Activated B cell treated with CpG ODN at 0.5 μM for 24 hours (primary cell): ENCODE measurements at regions of chr17 and their contacts with region 1.

Region 1: DNA sequence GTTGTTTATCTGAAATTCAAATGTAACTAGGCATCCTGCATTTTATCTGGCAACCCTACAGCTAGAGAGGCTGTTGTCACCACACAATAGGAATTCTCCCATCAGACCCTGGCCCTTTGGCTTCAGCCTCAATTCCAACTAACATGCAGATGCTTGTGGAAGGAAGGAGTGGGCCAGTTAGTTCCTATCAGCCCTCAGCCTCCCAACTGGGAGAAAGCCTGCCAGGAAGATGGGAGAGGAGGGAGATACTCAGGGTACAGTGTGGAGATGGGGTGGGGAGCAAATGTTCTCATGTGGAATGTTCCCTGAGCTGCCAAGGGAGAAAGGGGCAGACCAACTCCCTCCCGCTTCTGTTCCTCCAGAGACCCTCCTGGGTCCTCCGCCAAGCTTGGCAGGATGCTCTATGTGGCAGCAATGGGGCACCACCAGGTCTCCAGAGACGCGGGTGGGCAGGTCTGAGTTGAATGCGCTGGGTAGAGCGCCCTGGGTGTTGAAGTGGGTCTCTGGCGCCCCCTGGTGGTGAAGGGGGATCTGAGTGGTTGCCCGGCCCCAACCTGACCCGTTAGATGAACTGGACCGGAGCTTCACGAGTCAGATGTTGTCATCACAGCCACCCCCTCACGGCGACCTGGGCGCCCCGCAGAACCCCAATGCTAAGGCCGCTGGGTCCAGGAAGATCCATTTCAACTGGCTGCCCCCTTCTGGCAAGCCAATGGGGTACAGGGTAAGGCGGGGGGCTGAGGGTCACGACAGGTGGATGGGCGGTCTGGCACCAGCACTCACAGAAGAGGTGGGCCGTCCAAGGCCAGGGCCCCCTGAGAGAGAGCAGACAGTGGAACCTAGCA is 15.2 kb downstream of the GALK1 start:
- DNase-seq: peak; percentile 91
- ATAC-seq: peak; percentile 76
- H3K4me3 Mint-ChIP-seq: no peak overlapping the region
- H3K27ac Mint-ChIP-seq: peak overlapping the region; percentile 12
- H3K4me1 Mint-ChIP-seq: peaks cover 17% of the 10 kb centered on the region
- H3K27me3 Mint-ChIP-seq: no peaks in the 10 kb centered on the region
- CTCF ChIP-seq: no peak

Region 2: DNA sequence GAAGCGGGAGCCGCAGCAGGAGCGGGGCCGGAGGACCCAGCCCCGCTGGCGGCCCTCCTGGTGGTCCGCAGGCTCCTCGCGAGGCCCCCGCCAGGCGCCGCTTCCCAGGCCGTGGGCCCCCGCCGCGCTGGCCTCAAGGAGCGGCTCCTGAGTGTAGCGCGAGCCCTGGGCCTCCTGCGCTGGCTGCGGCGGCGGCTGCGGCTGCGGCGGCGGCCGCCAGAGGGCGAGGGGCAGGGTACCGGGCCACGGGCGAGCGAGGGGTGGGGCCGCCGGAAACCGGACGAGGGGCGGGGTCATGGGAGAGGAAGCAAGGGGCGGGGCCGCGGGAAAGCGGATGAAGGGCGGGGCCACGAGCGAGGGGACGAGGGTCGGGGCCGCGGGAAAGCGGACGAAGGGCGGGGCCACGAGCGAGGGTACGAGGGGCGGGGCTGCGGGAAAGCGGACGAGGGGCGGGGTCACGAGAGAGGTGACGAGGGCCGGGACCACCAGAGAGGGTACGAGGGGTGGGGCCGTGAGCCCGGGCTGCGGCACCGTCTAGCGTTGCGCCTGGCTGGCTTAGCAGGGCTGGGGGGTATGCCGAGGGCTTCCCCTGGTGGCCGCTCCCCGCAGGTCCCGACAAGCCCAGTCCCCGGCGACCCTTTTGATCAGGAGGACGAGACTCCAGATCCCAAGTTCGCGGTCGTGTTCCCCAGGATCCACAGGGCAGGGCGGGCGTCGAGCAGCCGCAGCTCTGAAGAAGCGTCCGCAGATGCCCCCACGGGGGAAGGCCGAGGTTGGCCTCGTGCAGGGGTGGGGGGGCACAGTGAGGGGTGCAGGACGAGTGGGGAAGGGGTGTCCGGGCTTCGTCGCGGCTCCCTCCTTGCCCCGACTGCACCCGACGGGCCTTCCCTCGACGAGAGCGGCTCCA is 160.5 kb before region 1 on chr17:
- CTCF ChIA-PET with region 1: interaction called, 7 read pairs
- POLR2A ChIA-PET with region 1: interaction called, 4 read pairs
- intact Hi-C with region 1: loop called (anchors 1 kb)
- DNase-seq: peak; percentile 97
- ATAC-seq: peak; percentile 84
- H3K4me3 Mint-ChIP-seq: peak overlapping the region; percentile 84
- H3K27ac Mint-ChIP-seq: peak overlapping the region; percentile 73
- H3K4me1 Mint-ChIP-seq: peaks cover 16% of the 10 kb centered on the region
- H3K27me3 Mint-ChIP-seq: no peaks in the 10 kb centered on the region
- CTCF ChIP-seq: no peak

Region 3: DNA sequence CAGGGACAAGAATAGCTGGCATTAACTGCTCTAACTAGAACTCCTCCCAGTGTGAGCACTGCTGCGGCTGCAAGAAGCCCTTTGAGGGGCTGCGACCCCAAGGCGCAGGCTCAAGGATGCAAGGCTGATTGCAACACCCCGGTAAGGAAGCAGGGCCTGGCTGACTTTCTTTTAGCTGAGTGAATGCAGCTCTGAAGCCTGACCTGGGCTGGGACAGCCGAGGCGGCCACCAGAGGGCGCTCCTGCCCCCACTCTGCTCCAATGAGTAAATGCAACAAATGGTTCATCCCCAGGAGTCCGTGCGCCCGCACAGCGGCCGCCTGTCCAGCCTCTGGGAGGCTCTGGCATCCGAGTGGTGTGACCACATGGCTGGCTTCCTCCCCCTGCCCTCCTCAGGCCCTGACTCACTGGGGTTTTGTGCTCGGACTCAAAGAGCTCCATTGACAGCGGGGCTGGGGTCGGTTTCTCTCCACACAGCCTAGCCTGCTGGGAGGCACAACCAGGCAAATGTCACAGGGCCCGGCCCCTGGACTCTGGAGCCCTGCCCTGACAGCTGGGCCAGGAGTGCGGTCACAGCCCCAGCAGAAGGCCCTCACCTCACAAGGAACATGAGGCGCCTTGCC is 116.8 kb before region 1 on chr17 and contains the start of gene SMIM5:
- CTCF ChIA-PET with region 1: interaction called, 346 read pairs
- POLR2A ChIA-PET with region 1: interaction called, 26 read pairs
- intact Hi-C with region 1: loop called (anchors 1 kb)
- DNase-seq: peak; percentile 83
- ATAC-seq: peak; percentile 89
- H3K4me3 Mint-ChIP-seq: peak within 1 kb of the TSS; percentile 11
- H3K27ac Mint-ChIP-seq: no peak within 1 kb of the TSS
- H3K4me1 Mint-ChIP-seq: peaks cover 13% of the 10 kb centered on the region
- H3K27me3 Mint-ChIP-seq: no peaks in the 10 kb centered on the region
- CTCF ChIP-seq: no peak
- total RNA-seq, gene SMIM5: 1.1 and 1.7 TPM in 2 replicates

Region 4: GRCh38 chr17:75673487-75673886 is 76.3 kb before region 1 on chr17:
- CTCF ChIA-PET with region 1: interaction called, 66 read pairs
- POLR2A ChIA-PET with region 1: interaction called, 3 read pairs
- intact Hi-C with region 1: loop called (anchors 1 kb)
- DNase-seq: no peak
- ATAC-seq: no peak
- H3K4me3 Mint-ChIP-seq: no peak overlapping the region
- H3K27ac Mint-ChIP-seq: no peak overlapping the region
- H3K4me1 Mint-ChIP-seq: peaks cover 28% of the 10 kb centered on the region
- H3K27me3 Mint-ChIP-seq: no peaks in the 10 kb centered on the region
- CTCF ChIP-seq: no peak

Region 5: GRCh38 chr17:75721463-75722461 is 28.0 kb before region 1 on chr17:
- CTCF ChIA-PET with region 1: no interaction called
- POLR2A ChIA-PET with region 1: no interaction called
- intact Hi-C with region 1: no loop called
- DNase-seq: no peak
- ATAC-seq: no peak
- H3K4me3 Mint-ChIP-seq: no peak overlapping the region
- H3K27ac Mint-ChIP-seq: no peak overlapping the region
- H3K4me1 Mint-ChIP-seq: peaks cover 4% of the 10 kb centered on the region
- H3K27me3 Mint-ChIP-seq: peaks cover 6% of the 10 kb centered on the region
- CTCF ChIP-seq: no peak

Region 6: GRCh38 chr17:75764711-75765421 is 15.1 kb after region 1 on chr17 and contains the start of gene GALK1:
- CTCF ChIA-PET with region 1: interaction called, 47 read pairs
- POLR2A ChIA-PET with region 1: interaction called, 30 read pairs
- intact Hi-C with region 1: no loop called
- DNase-seq: peak; percentile 74
- ATAC-seq: peak; percentile 95
- H3K4me3 Mint-ChIP-seq: peak within 1 kb of the TSS; percentile 81
- H3K27ac Mint-ChIP-seq: peak within 1 kb of the TSS; percentile 53
- H3K4me1 Mint-ChIP-seq: peaks cover 16% of the 10 kb centered on the region
- H3K27me3 Mint-ChIP-seq: no peaks in the 10 kb centered on the region
- CTCF ChIP-seq: no peak
- total RNA-seq, gene GALK1: 14.9 and 22.9 TPM in 2 replicates

Region 7: DNA sequence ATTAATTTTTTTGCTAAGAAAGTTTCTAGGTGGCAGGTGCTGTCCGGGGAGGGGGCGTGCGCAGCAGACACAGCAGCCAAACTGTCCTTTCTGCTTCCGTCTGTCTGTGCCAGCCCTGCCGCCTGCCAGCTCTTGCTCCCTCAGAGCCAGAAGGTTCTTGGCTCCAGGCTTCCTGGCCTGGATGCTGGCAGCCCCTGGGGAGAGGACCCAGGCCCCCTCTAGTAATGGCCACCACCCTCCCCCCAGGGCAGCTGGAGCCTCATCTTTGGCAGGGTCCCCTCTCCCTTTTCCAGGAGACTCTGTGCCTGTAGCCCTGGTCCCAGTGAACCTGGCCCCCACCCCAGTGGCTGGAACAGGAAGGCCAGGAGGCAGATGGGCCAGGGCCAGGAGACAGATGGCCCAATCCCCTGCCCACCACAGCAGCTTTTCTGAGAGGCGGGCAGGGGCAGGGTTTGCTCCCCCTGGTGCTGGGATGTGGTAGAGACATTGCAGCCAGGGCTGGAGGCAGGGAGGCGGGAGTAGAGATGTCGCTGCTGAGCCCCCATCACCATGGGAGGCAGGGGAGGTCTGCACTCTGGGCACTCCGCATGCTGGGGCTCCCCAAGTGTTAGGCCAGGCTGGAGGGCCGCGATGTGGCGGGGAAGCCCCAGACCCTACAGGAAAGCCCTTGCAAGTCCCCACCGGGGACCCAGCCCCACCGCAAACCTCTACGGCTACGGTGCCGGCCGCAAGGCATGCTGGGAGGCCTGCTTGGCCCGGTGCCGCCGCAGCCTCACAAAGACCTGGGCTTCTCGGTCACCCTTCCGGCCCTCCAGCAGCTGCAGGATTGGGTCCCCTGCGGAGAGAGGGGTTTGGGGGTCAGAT is 77.7 kb after region 1 on chr17:
- CTCF ChIA-PET with region 1: interaction called, 68 read pairs
- POLR2A ChIA-PET with region 1: interaction called, 24 read pairs
- intact Hi-C with region 1: loop called (anchors 1 kb)
- DNase-seq: peak; percentile 64
- ATAC-seq: peak; percentile 85
- H3K4me3 Mint-ChIP-seq: peak overlapping the region; percentile 64
- H3K27ac Mint-ChIP-seq: peak overlapping the region; percentile 79
- H3K4me1 Mint-ChIP-seq: peaks cover 16% of the 10 kb centered on the region
- H3K27me3 Mint-ChIP-seq: no peaks in the 10 kb centered on the region
- CTCF ChIP-seq: no peak

Region 8: DNA sequence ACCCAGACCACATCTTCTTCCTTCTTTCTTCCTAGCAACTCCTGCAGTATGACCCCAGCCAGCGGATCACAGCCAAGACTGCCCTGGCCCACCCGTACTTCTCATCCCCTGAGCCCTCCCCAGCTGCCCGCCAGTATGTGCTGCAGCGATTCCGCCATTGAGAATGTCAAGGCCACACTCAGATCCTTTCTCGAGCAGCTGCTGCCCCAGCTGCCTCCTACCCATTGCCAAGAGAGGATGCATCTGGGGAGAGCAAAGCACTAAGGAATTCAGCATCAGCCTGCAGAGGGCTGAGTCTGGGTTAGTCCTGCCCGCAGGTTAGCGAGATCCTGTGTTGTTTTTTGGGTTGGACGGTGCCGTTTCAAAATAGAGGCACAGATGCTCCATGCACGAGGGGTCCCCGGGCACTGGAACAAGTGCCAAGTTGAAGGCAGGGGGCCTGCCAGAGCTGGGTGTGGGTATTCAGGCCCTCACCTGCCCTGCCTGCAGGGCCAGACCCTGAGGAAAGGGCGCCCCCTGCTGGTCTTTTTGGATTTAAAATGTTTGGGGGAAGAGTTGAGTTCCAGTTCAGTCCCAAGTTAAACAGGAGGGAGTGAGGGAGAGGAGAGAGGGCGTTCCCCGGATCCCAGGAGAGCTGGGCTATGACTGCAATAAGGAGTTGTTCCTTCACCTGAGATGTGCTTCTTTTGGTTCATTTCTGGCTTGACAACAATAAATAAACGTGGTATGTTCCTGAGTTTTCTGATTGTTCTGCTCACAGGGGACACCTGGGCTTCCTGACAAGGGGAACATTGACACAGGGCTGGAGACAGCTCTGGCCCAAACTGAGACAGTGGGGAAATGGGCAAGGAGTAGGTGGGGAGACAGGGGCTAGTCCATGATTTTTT is 255.7 kb after region 1 on chr17:
- CTCF ChIA-PET with region 1: interaction called, 6 read pairs
- POLR2A ChIA-PET with region 1: interaction called, 3 read pairs
- intact Hi-C with region 1: loop called (anchors 2 kb)
- DNase-seq: peak; percentile 73
- ATAC-seq: peak; percentile 85
- H3K4me3 Mint-ChIP-seq: no peak overlapping the region
- H3K27ac Mint-ChIP-seq: peak overlapping the region; percentile 24
- H3K4me1 Mint-ChIP-seq: no peaks in the 10 kb centered on the region
- H3K27me3 Mint-ChIP-seq: no peaks in the 10 kb centered on the region
- CTCF ChIP-seq: no peak